ENCODE measurements at regions of chr7 and their contacts with region 1.

Region 1: GRCh38 chr7:105013221-105013815 is 687 bp upstream of the KMT2E start:
- DNase-seq: peak; percentile 91
- ATAC-seq: peak; percentile 57
- H3K4me3 Mint-ChIP-seq: peak overlapping the region; percentile 96
- H3K27ac Mint-ChIP-seq: peak overlapping the region; percentile 100
- H3K4me1 Mint-ChIP-seq: peaks cover 53% of the 10 kb centered on the region
- H3K27me3 Mint-ChIP-seq: no peaks in the 10 kb centered on the region
- CTCF ChIP-seq: no peak

Region 2: GRCh38 chr7:103074519-103075336 is 1938.6 kb before region 1 on chr7 and contains the starts of genes ARMC10 and FBXL13:
- CTCF ChIA-PET with region 1: no interaction called
- POLR2A ChIA-PET with region 1: no interaction called
- intact Hi-C with region 1: loop called (anchors 10 kb)
- DNase-seq: peak; percentile 95
- ATAC-seq: peak; percentile 85
- H3K4me3 Mint-ChIP-seq: peak within 1 kb of the TSS; percentile 94
- H3K27ac Mint-ChIP-seq: peak within 1 kb of the TSS; percentile 95
- H3K4me1 Mint-ChIP-seq: peaks cover 41% of the 10 kb centered on the region
- H3K27me3 Mint-ChIP-seq: no peaks in the 10 kb centered on the region
- CTCF ChIP-seq: no peak
- total RNA-seq, gene ARMC10: 24.9 and 26.7 TPM in 2 replicates
- total RNA-seq, gene FBXL13: 2.9 and 3.4 TPM in 2 replicates

Region 3: DNA sequence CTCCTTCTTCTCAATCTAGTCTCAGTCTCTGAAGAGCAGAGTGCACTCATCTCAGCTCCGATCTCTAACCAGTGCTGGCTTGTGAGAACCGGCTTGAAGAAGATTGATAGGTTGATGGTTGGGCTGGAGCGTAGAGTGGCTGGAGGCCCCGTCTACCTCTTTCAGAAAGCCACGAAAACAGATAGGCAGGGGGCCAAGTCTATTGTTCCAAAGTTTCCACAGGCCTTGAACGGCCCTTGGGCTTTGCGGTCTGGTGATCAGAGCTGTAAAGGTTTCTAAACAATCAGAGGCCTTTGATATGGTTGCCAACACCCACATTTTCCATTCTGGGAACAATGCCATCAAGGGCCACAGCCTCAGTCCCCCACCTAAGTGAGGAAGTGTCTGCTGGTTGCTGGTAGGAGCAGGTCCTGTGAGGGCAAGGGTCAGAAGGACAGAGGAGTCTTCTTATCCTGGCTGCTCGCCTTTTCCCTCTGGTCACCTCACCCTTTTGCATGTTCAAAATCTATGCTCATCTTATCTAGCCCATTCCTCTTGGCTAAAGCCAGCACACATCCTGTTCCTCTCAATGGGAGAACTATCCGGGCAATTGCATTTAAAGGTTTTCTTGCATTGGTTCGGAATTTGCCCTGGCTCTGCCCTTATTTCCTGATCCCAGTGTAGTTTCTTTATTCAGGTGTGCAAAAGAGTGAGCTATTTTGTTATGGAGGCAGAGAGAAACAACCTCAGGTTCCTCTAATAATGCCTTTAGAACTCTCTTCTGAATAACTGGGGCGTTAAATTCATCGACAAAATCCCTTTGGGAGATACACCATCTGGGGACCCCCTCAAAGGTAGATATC is 69.6 kb before region 1 on chr7:
- CTCF ChIA-PET with region 1: interaction called, 3 read pairs
- POLR2A ChIA-PET with region 1: interaction called, 328 read pairs
- intact Hi-C with region 1: loop called (anchors 1 kb)
- DNase-seq: peak; percentile 53
- ATAC-seq: peak; percentile 9
- H3K4me3 Mint-ChIP-seq: peak overlapping the region; percentile 98
- H3K27ac Mint-ChIP-seq: peak overlapping the region; percentile 100
- H3K4me1 Mint-ChIP-seq: peaks cover 83% of the 10 kb centered on the region
- H3K27me3 Mint-ChIP-seq: no peaks in the 10 kb centered on the region
- CTCF ChIP-seq: no peak

Region 4: GRCh38 chr7:105024743-105025142 is 11.4 kb after region 1 on chr7:
- CTCF ChIA-PET with region 1: interaction called, 6 read pairs
- POLR2A ChIA-PET with region 1: interaction called, 98 read pairs
- intact Hi-C with region 1: loop called (anchors 1 kb)
- DNase-seq: no peak
- ATAC-seq: no peak
- H3K4me3 Mint-ChIP-seq: no peak overlapping the region
- H3K27ac Mint-ChIP-seq: no peak overlapping the region
- H3K4me1 Mint-ChIP-seq: peaks cover 91% of the 10 kb centered on the region
- H3K27me3 Mint-ChIP-seq: no peaks in the 10 kb centered on the region
- CTCF ChIP-seq: no peak

Region 5: GRCh38 chr7:105046414-105046813 is 33.1 kb after region 1 on chr7:
- CTCF ChIA-PET with region 1: no interaction called
- POLR2A ChIA-PET with region 1: interaction called, 105 read pairs
- intact Hi-C with region 1: loop called (anchors 2 kb)
- DNase-seq: no peak
- ATAC-seq: no peak
- H3K4me3 Mint-ChIP-seq: no peak overlapping the region
- H3K27ac Mint-ChIP-seq: no peak overlapping the region
- H3K4me1 Mint-ChIP-seq: peaks cover 34% of the 10 kb centered on the region
- H3K27me3 Mint-ChIP-seq: no peaks in the 10 kb centered on the region
- CTCF ChIP-seq: no peak

Region 6: DNA sequence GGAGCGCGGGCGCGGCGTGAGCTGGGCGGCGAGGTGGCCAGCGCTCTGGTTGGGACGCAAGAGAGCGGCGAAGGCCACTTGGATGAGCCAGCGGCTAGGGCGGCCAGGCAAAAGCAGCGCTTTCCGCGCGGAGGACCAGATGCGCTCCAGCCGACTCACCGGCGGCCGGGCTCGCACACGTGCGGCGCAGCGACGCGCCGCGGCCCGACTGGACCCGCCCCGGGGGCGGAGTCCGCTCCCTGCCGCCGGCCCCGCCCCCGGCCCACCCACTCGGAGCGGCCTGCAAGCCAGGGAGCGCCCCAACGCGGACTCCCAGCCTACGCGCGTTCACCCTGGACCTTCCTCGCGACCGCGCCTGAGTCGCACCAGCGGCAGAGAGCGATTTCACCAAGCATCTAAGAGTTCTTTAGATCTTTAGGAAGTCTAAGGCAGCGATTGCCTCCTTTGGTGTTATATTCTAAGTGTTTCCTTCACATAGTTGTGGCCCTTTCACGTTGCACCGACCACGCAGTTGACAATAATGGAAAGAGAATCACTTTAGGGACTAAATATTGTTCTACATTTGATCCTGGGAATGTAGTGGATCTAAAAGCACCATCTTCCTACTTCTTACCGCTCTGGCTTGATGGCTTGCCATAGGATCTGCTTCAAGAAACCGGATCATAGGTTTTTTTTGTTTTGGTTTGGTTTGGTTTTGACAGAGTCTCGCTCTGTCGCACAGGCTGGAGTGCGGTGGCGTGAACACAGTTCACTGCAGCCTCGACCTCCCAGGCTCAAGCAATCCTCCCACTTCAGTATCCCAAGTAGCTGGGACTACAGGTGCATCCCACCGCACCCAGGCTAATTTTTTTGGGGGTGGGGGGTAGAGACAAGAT is 509.0 kb after region 1 on chr7 and contains the start of gene PUS7:
- CTCF ChIA-PET with region 1: no interaction called
- POLR2A ChIA-PET with region 1: no interaction called
- intact Hi-C with region 1: loop called (anchors 1 kb)
- DNase-seq: peak; percentile 73
- ATAC-seq: peak; percentile 94
- H3K4me3 Mint-ChIP-seq: peak within 1 kb of the TSS; percentile 93
- H3K27ac Mint-ChIP-seq: peak within 1 kb of the TSS; percentile 82
- H3K4me1 Mint-ChIP-seq: peaks cover 27% of the 10 kb centered on the region
- H3K27me3 Mint-ChIP-seq: no peaks in the 10 kb centered on the region
- CTCF ChIP-seq: no peak
- total RNA-seq, gene PUS7: 17.8 and 18.0 TPM in 2 replicates

Region 7: GRCh38 chr7:106112117-106112971 is 1099.0 kb after region 1 on chr7 and contains the start of gene SYPL1:
- CTCF ChIA-PET with region 1: no interaction called
- POLR2A ChIA-PET with region 1: no interaction called
- intact Hi-C with region 1: loop called (anchors 5 kb)
- DNase-seq: peak; percentile 94
- ATAC-seq: peak; percentile 76
- H3K4me3 Mint-ChIP-seq: peak within 1 kb of the TSS; percentile 94
- H3K27ac Mint-ChIP-seq: peak within 1 kb of the TSS; percentile 97
- H3K4me1 Mint-ChIP-seq: peaks cover 80% of the 10 kb centered on the region
- H3K27me3 Mint-ChIP-seq: no peaks in the 10 kb centered on the region
- CTCF ChIP-seq: no peak
- total RNA-seq, gene SYPL1: 109 and 116 TPM in 2 replicates

Measured in activated B cell treated with CpG ODN at 0.5 μM for 24 hours (primary cell).